ENCODE measurements at regions of chr3 and their contacts with region 1.

Region 1: DNA sequence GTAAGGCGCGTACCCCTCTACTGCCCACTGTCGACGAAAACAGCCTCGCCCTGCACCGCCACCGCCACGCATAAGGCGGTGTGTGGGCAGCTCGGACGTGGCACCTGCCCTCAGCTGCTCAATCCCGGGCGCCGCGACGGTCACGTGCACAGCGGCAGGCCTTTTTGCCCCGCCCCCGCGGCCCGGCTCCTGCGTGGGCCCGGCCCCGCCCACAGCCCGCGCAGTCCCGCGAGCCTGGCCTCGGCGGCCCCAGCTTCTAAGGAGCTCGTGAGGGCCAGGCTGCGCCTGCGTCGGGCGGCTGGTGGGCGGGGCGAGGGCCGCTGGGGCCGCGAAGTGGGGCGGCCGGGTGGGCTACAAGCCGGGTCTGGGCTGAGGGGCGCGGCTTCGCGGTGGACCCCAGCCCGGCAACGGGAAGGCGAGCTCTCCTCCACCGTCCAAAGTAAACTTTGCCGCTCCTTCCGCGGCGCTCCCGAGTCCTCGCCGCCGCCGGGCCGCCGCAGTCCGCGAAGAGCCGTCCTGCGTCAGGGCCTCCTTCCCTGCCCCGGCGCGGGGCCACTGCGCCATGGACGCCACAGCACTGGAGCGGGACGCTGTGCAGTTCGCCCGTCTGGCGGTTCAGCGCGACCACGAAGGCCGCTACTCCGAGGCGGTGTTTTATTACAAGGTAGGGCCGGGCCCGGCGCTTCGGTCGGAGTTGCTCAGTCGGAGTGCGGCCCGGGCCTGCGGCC is at the start of gene CAPN7:
- DNase-seq: peak; percentile 90 to 96
- ATAC-seq: peak; percentile 83 to 84
- H3K4me3 ChIP-seq: peak within 1 kb of the TSS; percentile 81 to 93 (median 88)
- H3K27ac ChIP-seq: peak within 1 kb of the TSS; percentile 97 to 99 (median 98)
- H3K4me1 ChIP-seq: peaks cover 15 to 23% of the 10 kb centered on the region in 2 donors
- H3K27me3 ChIP-seq: no peaks in the 10 kb centered on the region
- CTCF ChIP-seq: peak; percentile 27 to 66 (median 60)
- POLR2A ChIP-seq: peak; percentile 99
- total RNA-seq, gene CAPN7: 33.8 to 153 (median 69.7) TPM

Region 2: DNA sequence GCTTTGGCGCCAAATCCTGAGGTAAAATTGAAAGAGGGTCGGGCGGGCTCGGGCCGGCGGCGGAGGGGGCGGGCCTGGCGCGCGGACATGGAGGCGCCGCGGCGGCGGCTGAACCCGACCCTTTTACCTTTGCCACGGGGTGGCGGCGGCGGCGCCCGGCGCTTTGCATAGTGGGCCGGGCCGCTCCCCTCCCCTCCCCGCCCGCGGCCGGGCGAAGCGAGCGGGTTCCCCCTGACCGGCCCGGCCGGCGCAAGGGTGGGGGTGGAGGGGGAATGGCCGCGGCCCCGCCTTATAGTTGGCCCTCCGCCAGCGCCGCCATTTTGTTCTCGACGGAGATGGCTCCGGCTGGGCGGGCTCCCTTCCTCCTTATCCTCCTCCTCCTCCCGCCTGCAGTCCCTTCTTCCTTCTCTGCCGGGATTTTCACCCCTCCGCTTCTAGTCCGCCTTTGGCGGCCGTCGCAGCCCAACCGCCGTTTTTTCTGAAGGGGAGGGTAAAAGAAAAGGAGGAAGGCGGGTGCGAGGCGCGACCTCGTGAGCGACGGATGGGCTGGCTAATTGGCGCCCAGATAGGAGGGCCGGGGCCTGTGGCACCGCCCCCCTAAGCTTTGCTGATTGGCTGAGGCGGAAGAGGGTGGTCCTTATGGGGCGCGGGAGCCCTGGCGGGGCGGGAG is 258.1 kb before region 1 on chr3:
- in situ Hi-C with region 1: loop called in 2 of 4 experiments (anchors 25 kb)
- intact Hi-C with region 1: loop called (anchors 10 kb)
- DNase-seq: peak; percentile 97
- ATAC-seq: peak; percentile 86 to 88
- H3K4me3 ChIP-seq: peak overlapping the region; percentile 66 to 98 (median 80)
- H3K27ac ChIP-seq: peak overlapping the region; percentile 96 to 99 (median 99)
- H3K4me1 ChIP-seq: peaks cover 34 to 42% of the 10 kb centered on the region in 2 donors
- H3K27me3 ChIP-seq: no peaks in the 10 kb centered on the region
- CTCF ChIP-seq: peak in 1 of 5 experiments; percentile 16
- POLR2A ChIP-seq: peak in 1 of 2 donors; percentile 1

Region 3: DNA sequence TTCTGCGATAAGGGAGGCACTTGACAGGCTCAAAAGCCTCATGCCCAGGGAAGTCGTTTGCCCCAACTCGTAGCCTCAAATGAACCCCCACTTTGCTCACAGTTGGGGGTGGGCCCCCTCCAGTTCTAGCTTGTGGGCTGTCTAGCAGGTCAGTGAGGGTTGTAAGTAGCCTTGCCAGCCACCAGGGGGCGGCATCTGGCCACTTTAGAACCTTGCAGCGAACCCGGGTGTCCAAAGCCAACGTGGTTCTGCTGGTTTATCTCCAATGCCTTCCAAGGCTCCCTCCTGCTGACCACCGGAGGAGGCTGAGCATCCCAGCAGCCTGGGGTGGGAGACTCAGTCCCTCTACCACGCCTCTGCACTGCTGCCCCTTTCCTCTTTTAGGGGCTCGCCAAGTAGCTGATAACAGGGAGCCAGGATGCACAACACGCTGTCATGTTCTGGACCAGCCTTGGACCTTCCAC is 98.0 kb before region 1 on chr3:
- in situ Hi-C with region 1: loop called in 2 of 4 experiments (anchors 5 kb)
- intact Hi-C with region 1: no loop called
- DNase-seq: peak; percentile 44 to 49
- ATAC-seq: peak; percentile 69 to 80
- H3K4me3 ChIP-seq: no peak overlapping the region
- H3K27ac ChIP-seq: no peak overlapping the region
- H3K4me1 ChIP-seq: peaks cover 6 to 10% of the 10 kb centered on the region in 2 donors
- H3K27me3 ChIP-seq: no peaks in the 10 kb centered on the region
- CTCF ChIP-seq: peak; percentile 63 to 93 (median 84)
- POLR2A ChIP-seq: no peak

Region 4: DNA sequence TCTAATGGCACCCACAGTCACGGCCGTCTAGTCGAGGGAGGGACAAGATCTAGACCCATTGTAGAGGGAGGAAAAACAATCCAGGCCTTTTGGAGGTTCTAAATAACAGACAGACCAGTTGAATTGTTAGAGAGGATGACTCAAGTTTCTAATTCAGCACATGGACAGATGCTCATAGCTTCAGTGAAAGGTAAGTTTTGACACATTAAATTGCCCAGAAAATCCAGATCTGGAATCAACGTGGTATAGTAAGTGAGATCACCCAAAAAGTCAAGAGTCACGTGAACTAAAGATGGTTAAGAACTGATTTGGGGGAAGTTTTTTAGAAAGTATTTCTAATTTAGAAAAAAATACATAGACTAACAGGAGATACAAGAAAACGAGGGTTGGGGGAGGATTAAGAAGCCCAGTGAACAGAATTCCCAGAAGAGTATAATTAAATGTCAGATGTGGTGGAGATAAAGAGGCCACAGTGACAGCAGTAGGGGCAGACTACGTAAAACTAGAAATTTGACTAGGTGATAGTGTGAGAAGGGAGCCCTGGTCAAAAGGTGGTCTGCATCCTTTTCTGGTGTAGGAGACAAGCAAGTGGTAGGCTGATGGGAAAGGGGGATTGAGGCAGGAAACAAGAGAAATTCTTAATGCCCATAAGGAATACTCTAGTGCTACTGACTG is 47.1 kb after region 1 on chr3:
- in situ Hi-C with region 1: no loop called
- intact Hi-C with region 1: no loop called
- DNase-seq: no peak
- ATAC-seq: no peak
- H3K4me3 ChIP-seq: no peak overlapping the region
- H3K27ac ChIP-seq: no peak overlapping the region
- H3K4me1 ChIP-seq: peaks cover 5 to 7% of the 10 kb centered on the region in 2 donors
- H3K27me3 ChIP-seq: no peaks in the 10 kb centered on the region
- CTCF ChIP-seq: no peak
- POLR2A ChIP-seq: no peak

Region 5: DNA sequence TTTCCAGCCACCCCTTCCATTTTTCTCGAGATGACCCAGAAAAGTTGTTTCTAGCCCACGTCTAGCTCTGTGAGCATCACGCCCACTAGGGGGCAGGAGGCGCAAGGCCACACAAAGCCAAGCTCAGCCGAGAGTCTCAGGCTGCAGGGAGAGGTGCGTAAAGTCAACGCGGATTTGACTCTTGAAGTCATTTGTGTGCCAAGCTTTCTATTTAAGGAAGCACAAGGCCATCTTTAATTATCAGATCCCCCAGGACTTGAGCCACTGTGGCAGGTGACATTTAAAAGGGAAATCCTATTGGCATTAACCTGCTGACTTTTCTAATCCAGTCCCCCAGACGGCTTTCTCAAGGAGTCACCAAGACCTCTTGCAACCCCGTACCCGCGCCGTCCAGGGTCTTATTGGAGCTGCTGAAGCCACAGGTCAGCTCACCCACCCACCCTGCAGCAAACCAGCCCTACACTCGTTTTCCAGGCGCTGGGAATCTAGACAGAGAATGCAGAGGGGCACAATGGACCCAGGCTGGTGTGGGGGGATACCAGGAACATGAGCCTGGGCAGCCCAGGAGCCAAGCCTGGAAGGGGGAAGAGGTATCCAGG is 62.0 kb after region 1 on chr3:
- in situ Hi-C with region 1: no loop called
- intact Hi-C with region 1: loop called (anchors 1 kb)
- DNase-seq: peak; percentile 74 to 85
- ATAC-seq: peak; percentile 75 to 82
- H3K4me3 ChIP-seq: peak overlapping the region in 1 of 4 donors; percentile 1
- H3K27ac ChIP-seq: peak overlapping the region; percentile 73 to 81 (median 74)
- H3K4me1 ChIP-seq: peaks cover 46 to 57% of the 10 kb centered on the region in 2 donors
- H3K27me3 ChIP-seq: no peaks in the 10 kb centered on the region
- CTCF ChIP-seq: peak; percentile 94 to 97 (median 96)
- POLR2A ChIP-seq: no peak

Region 6: DNA sequence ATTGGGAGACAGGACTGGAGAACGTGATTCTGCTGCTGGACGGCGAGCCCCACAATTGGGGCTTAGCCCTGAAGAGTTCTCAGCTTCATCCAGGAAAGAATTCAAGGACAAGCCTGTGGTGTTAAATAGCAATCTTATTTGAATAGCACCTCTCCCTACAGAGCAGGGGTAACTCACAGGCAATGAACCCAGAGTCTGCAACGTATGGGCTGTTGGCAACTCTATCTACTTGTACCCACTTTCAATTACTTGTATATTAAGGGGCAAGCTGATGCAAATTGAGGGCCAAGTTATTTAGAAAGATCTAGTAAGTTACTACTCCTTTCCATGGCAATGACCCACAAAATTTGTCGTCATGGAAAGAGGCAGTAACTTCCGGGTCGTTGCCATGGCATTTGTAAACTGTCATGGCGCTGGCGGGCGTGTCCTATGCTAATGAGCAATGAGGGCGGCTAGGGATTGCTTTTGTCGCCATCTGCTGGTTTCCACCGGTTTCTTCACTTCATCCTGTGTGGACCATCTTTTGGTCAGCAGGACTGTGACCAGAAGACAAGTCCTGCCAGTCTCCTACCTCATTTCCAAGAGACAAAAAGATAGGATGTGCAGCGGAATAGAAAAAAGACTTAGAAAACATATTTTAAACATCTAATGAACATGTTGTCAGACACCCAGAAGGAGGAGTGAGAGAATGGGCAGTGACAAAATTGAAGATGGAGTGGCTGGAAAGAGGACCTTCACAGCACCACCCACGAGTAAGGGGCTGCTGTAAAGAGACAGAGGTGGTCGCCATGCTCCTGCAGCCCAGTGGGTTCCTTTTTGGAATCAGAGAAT is 172.1 kb after region 1 on chr3:
- in situ Hi-C with region 1: no loop called
- intact Hi-C with region 1: loop called (anchors 2 kb)
- DNase-seq: peak; percentile 92 to 95
- ATAC-seq: peak; percentile 98 to 99
- H3K4me3 ChIP-seq: peak overlapping the region in 3 of 4 donors; percentile 24 to 37 (median 27)
- H3K27ac ChIP-seq: peak overlapping the region; percentile 57 to 74 (median 66)
- H3K4me1 ChIP-seq: peaks cover 0 to 4% of the 10 kb centered on the region in 2 donors
- H3K27me3 ChIP-seq: no peaks in the 10 kb centered on the region
- CTCF ChIP-seq: peak; percentile 88 to 94 (median 91)
- POLR2A ChIP-seq: no peak

Region 7: DNA sequence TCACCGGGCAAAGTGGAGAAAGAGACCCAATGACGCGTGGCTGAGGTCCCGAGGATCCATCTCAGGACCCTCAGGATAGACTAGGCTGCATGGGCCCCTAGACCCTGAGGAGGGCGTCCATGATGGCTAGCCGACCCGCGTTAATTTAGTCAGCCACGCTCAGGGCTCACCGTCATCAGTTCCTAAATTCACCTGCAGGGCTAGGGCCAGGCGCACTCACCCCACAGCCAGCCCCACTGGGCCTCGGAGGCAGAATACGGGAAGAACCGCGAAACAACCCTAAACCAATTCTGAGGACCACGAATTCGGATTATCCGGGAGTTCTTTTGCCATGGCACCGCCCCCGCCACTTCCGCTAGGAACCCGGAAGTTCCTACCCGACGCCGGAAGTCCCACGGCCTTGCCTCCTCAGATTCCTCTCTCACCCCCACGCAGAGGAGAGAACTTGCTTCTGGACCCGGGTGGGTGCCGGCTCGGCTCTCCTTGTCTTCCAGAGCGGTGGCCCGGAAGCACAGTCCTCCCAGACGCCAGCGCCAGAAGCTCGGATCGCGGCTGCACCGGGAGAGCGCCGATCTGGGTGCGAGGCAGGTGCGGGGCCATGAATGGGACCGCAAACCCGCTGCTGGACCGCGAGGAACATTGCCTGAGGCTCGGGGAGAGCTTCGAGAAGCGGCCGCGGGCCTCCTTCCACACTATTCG is 221.2 kb after region 1 on chr3 and contains the starts of genes EAF1 and METTL6:
- in situ Hi-C with region 1: no loop called
- intact Hi-C with region 1: loop called (anchors 5 kb)
- DNase-seq: peak; percentile 64 to 72
- ATAC-seq: peak; percentile 90 to 94
- H3K4me3 ChIP-seq: peak within 1 kb of the TSS; percentile 80 to 100 (median 90)
- H3K27ac ChIP-seq: peak within 1 kb of the TSS; percentile 85 to 88 (median 87)
- H3K4me1 ChIP-seq: peaks cover 33 to 40% of the 10 kb centered on the region in 2 donors
- H3K27me3 ChIP-seq: no peaks in the 10 kb centered on the region
- CTCF ChIP-seq: peak in 4 of 5 experiments; percentile 20 to 49 (median 48)
- POLR2A ChIP-seq: peak; percentile 25 to 43
- total RNA-seq, gene EAF1: 9.4 to 17.3 (median 10.5) TPM
- total RNA-seq, gene METTL6: 6.8 to 22.0 (median 7.8) TPM

Region 8: GRCh38 chr3:15557511-15557946 is 351.4 kb after region 1 on chr3:
- in situ Hi-C with region 1: loop called (anchors 10 to 25 kb)
- intact Hi-C with region 1: loop called (anchors 5 kb)
- DNase-seq: peak in 1 of 2 donors; percentile 40
- ATAC-seq: peak; percentile 60 to 66
- H3K4me3 ChIP-seq: no peak overlapping the region
- H3K27ac ChIP-seq: no peak overlapping the region
- H3K4me1 ChIP-seq: peaks cover 3% of the 10 kb centered on the region in 2 donors
- H3K27me3 ChIP-seq: no peaks in the 10 kb centered on the region
- CTCF ChIP-seq: peak; percentile 56 to 75 (median 61)
- POLR2A ChIP-seq: no peak